ENCODE measurements at regions of chr22 and their contacts with region 1.

Region 1: GRCh38 chr22:37019309-37020125 is at the starts of genes MPST and TST:
- DNase-seq: peak in 1 of 2 experiments; percentile 63
- ATAC-seq: peak; percentile 90 to 91
- H3K4me3 ChIP-seq: peak within 1 kb of the TSS; percentile 98
- H3K27ac ChIP-seq: peak within 1 kb of the TSS; percentile 99 to 100
- H3K4me1 ChIP-seq: peaks cover 53% of the 10 kb centered on the region
- CTCF ChIP-seq: no peak
- EP300 ChIP-seq: no peak
- POLR2A ChIP-seq: peak; percentile 49
- RAD21 ChIP-seq: no peak
- polyA plus RNA-seq, gene MPST: 40.6 and 44.2 TPM in 2 replicates
- polyA plus RNA-seq, gene TST: 43.2 and 49.4 TPM in 2 replicates

Region 2: GRCh38 chr22:36846949-36847348 is 172.6 kb before region 1 on chr22:
- CTCF ChIA-PET with region 1: no interaction called
- POLR2A ChIA-PET with region 1: no interaction called
- DNase-seq: no peak
- ATAC-seq: no peak
- H3K4me3 ChIP-seq: no peak overlapping the region
- H3K27ac ChIP-seq: no peak overlapping the region
- H3K4me1 ChIP-seq: no peaks in the 10 kb centered on the region
- CTCF ChIP-seq: no peak
- EP300 ChIP-seq: no peak
- POLR2A ChIP-seq: no peak
- RAD21 ChIP-seq: no peak

Region 3: GRCh38 chr22:36977947-36978660 is 41.4 kb before region 1 on chr22:
- CTCF ChIA-PET with region 1: interaction called, 12 read pairs
- POLR2A ChIA-PET with region 1: no interaction called
- DNase-seq: peak; percentile 82 to 84
- ATAC-seq: peak; percentile 87 to 88
- H3K4me3 ChIP-seq: peak overlapping the region; percentile 46
- H3K27ac ChIP-seq: peak overlapping the region; percentile 63 to 86; a peak in 5 of 6 replicates
- H3K4me1 ChIP-seq: no peaks in the 10 kb centered on the region
- CTCF ChIP-seq: peak; percentile 67
- EP300 ChIP-seq: no peak
- POLR2A ChIP-seq: no peak
- RAD21 ChIP-seq: peak; percentile 78 to 79

Region 4: DNA sequence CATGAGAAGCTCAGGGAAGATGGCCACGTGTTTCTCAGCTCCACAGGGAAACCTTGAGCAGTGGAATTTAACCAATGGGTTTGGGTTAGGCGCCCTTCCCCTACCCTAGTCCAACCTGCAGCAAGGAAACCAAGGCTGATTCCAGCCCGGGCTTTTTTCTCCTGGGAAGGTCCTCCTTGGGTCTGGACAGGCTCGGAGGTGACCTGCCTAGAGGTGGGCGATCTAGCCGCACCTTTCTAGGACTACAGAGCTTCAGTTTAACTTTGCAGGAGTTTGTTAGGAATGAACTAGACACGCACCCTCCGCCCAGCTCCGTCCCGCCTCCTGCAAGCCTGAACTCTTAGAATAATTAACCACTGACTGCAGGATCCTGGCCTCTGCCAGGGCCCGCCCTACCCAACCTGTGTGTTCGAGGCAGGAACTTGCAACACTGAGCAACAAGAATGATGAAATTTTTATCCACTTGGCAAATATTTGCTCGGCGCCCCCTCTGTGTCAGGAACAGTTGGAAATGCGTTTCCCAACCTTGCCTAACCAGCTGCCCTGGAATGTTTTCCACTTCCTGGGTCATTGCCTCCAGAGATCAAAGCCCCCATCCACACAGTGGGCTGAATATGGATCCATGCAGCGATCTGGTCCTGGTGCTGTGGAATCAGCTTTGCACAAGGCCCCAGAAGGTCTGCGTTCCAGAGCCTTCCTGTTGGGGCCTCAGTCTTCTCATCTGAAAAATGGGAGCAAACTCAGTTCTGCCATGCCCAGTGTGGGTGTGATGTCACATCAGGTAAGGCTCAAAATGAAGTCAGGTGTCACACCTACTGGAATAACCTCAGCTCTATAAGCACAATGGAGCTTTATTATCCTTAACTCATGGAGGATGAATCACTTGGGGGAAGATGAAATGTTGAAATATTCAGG is 13.3 kb after region 1 on chr22:
- CTCF ChIA-PET with region 1: interaction called, 77 read pairs
- POLR2A ChIA-PET with region 1: interaction called, 15 read pairs
- DNase-seq: peak; percentile 87 to 96
- ATAC-seq: peak; percentile 95 to 96
- H3K4me3 ChIP-seq: peak overlapping the region; percentile 37
- H3K27ac ChIP-seq: peak overlapping the region; percentile 98 to 100
- H3K4me1 ChIP-seq: peaks cover 59% of the 10 kb centered on the region
- CTCF ChIP-seq: no peak; the same call in 2 of the 3 replicates
- EP300 ChIP-seq: peak; percentile 86 to 96; a peak in 4 of 5 replicates
- POLR2A ChIP-seq: 0 out of 2 replicates have a peak, but pooled peaks have one; percentile 18
- RAD21 ChIP-seq: peak in 1 of 2 experiments; percentile 30; a peak in 1 of 5 replicates

Region 5: GRCh38 chr22:37126882-37127281 is 107.4 kb after region 1 on chr22:
- CTCF ChIA-PET with region 1: no interaction called
- POLR2A ChIA-PET with region 1: no interaction called
- DNase-seq: peak in 1 of 2 experiments; percentile 19
- ATAC-seq: peak; percentile 51 to 82; a peak in 5 of 6 replicates
- H3K4me3 ChIP-seq: no peak overlapping the region
- H3K27ac ChIP-seq: peak overlapping the region in 1 of 2 experiments; percentile 54; a peak in 2 of 6 replicates
- H3K4me1 ChIP-seq: peaks cover 12% of the 10 kb centered on the region; the same call in 2 of the 3 replicates
- CTCF ChIP-seq: peak; percentile 28; the same call in 2 of the 3 replicates
- EP300 ChIP-seq: no peak
- POLR2A ChIP-seq: no peak
- RAD21 ChIP-seq: peak; percentile 20 to 50; a peak in 3 of 5 replicates

Measured in A549 (cell line).